CD8-positive, alpha-beta memory T cell (primary cell): ENCODE measurements at regions of chr20 and their contacts with region 1.

Region 1: GRCh38 chr20:8766868-8767390 is 302.0 kb upstream of the PLCB4 start:
- DNase-seq: no peak
- H3K4me3 ChIP-seq: no peak overlapping the region
- H3K4me3 Mint-ChIP-seq: no peak overlapping the region
- H3K27ac ChIP-seq: no peak overlapping the region
- H3K27ac Mint-ChIP-seq: no peak overlapping the region
- H3K4me1 ChIP-seq: no peaks in the 10 kb centered on the region
- H3K4me1 Mint-ChIP-seq: no peaks in the 10 kb centered on the region
- H3K27me3 ChIP-seq: no peaks in the 10 kb centered on the region
- H3K27me3 Mint-ChIP-seq: no peaks in the 10 kb centered on the region

Region 2: GRCh38 chr20:8678098-8678776 is 88.7 kb before region 1 on chr20:
- CTCF ChIA-PET with region 1: no interaction called
- POLR2A ChIA-PET with region 1: no interaction called
- DNase-seq: no peak
- H3K4me3 ChIP-seq: no peak overlapping the region
- H3K4me3 Mint-ChIP-seq: no peak overlapping the region
- H3K27ac ChIP-seq: no peak overlapping the region
- H3K27ac Mint-ChIP-seq: no peak overlapping the region
- H3K4me1 ChIP-seq: no peaks in the 10 kb centered on the region
- H3K4me1 Mint-ChIP-seq: no peaks in the 10 kb centered on the region
- H3K27me3 ChIP-seq: no peaks in the 10 kb centered on the region
- H3K27me3 Mint-ChIP-seq: no peaks in the 10 kb centered on the region

Region 3: GRCh38 chr20:8756410-8756809 is 10.5 kb before region 1 on chr20:
- CTCF ChIA-PET with region 1: interaction called, 10 read pairs
- POLR2A ChIA-PET with region 1: no interaction called
- DNase-seq: no peak
- H3K4me3 ChIP-seq: no peak overlapping the region
- H3K4me3 Mint-ChIP-seq: no peak overlapping the region
- H3K27ac ChIP-seq: no peak overlapping the region
- H3K27ac Mint-ChIP-seq: peak overlapping the region in 1 of 8 donors; percentile 66
- H3K4me1 ChIP-seq: no peaks in the 10 kb centered on the region
- H3K4me1 Mint-ChIP-seq: peaks cover 0 to 7% (median 0%) of the 10 kb centered on the region in 3 donors
- H3K27me3 ChIP-seq: no peaks in the 10 kb centered on the region
- H3K27me3 Mint-ChIP-seq: no peaks in the 10 kb centered on the region